ENCODE measurements at regions of chr3 and their contacts with region 1.

Region 1: GRCh38 chr3:4978204-4978965 is 852 bp upstream of the BHLHE40 start:
- DNase-seq: peak; percentile 98
- H3K4me3 ChIP-seq: peak overlapping the region; percentile 2 to 65 (median 63)
- H3K27ac ChIP-seq: peak overlapping the region; percentile 98
- H3K4me1 ChIP-seq: peaks cover 42% of the 10 kb centered on the region
- H3K27me3 ChIP-seq: no peaks in the 10 kb centered on the region
- CTCF ChIP-seq: no peak
- POLR2A ChIP-seq: peak; percentile 75

Region 2: GRCh38 chr3:4493014-4493940 is 485.1 kb before region 1 on chr3 and contains the start of gene ITPR1:
- CTCF ChIA-PET with region 1: no interaction called
- POLR2A ChIA-PET with region 1: no interaction called
- dilution Hi-C with region 1: no loop called
- intact Hi-C with region 1: loop called (anchors 2 kb)
- DNase-seq: peak; percentile 99
- H3K4me3 ChIP-seq: peak within 1 kb of the TSS; percentile 75 to 88 (median 85)
- H3K27ac ChIP-seq: peak within 1 kb of the TSS; percentile 80
- H3K4me1 ChIP-seq: peaks cover 24% of the 10 kb centered on the region
- H3K27me3 ChIP-seq: peaks cover 0 to 2% of the 10 kb centered on the region in 2 experiments
- CTCF ChIP-seq: no peak
- POLR2A ChIP-seq: peak; percentile 99
- total RNA-seq, gene ITPR1: 16.1 and 18.0 TPM in 2 replicates

Region 3: GRCh38 chr3:4722103-4722502 is 256.3 kb before region 1 on chr3:
- CTCF ChIA-PET with region 1: interaction called, 284 read pairs
- POLR2A ChIA-PET with region 1: interaction called, 4 read pairs
- dilution Hi-C with region 1: no loop called
- intact Hi-C with region 1: loop called (anchors 1 kb)
- DNase-seq: peak; percentile 81
- H3K4me3 ChIP-seq: no peak overlapping the region
- H3K27ac ChIP-seq: peak overlapping the region; percentile 1
- H3K4me1 ChIP-seq: no peaks in the 10 kb centered on the region
- H3K27me3 ChIP-seq: no peaks in the 10 kb centered on the region
- CTCF ChIP-seq: peak; percentile 40 to 57
- POLR2A ChIP-seq: no peak

Region 4: GRCh38 chr3:4751502-4752101 is 226.8 kb before region 1 on chr3:
- CTCF ChIA-PET with region 1: interaction called, 9 read pairs
- POLR2A ChIA-PET with region 1: no interaction called
- dilution Hi-C with region 1: no loop called
- intact Hi-C with region 1: loop called (anchors 1 kb)
- DNase-seq: peak; percentile 92
- H3K4me3 ChIP-seq: no peak overlapping the region
- H3K27ac ChIP-seq: peak overlapping the region; percentile 80
- H3K4me1 ChIP-seq: peaks cover 22% of the 10 kb centered on the region
- H3K27me3 ChIP-seq: no peaks in the 10 kb centered on the region
- CTCF ChIP-seq: no peak
- POLR2A ChIP-seq: no peak

Region 5: DNA sequence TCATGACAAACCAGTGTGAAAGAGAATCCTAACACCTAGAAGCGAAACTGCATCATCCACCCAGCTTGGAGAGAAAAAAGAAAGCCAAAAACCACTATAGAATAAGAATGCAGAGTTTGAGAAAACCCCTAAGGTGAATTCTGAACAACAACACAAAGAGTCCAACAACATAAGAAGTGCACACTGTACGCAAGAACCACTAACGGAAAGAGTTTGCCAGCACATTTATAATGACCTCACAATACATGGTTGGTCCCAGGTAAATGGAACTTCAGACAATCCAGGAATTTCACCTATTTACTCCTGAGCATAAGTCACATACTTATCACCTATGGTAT is 127.5 kb before region 1 on chr3:
- CTCF ChIA-PET with region 1: interaction called, 7 read pairs
- POLR2A ChIA-PET with region 1: no interaction called
- dilution Hi-C with region 1: no loop called
- intact Hi-C with region 1: loop called (anchors 1 kb)
- DNase-seq: no peak
- H3K4me3 ChIP-seq: no peak overlapping the region
- H3K27ac ChIP-seq: no peak overlapping the region
- H3K4me1 ChIP-seq: peaks cover 32% of the 10 kb centered on the region
- H3K27me3 ChIP-seq: no peaks in the 10 kb centered on the region
- CTCF ChIP-seq: no peak
- POLR2A ChIP-seq: no peak

Region 6: GRCh38 chr3:5057857-5058324 is 79.5 kb after region 1 on chr3:
- CTCF ChIA-PET with region 1: interaction called, 46 read pairs
- POLR2A ChIA-PET with region 1: no interaction called
- dilution Hi-C with region 1: no loop called
- intact Hi-C with region 1: loop called (anchors 1 kb)
- DNase-seq: peak; percentile 85
- H3K4me3 ChIP-seq: no peak overlapping the region
- H3K27ac ChIP-seq: no peak overlapping the region
- H3K4me1 ChIP-seq: no peaks in the 10 kb centered on the region
- H3K27me3 ChIP-seq: peaks cover 0 to 2% of the 10 kb centered on the region in 2 experiments
- CTCF ChIP-seq: peak; percentile 59 to 65
- POLR2A ChIP-seq: no peak

Region 7: GRCh38 chr3:5376761-5377160 is 398.4 kb after region 1 on chr3:
- CTCF ChIA-PET with region 1: no interaction called
- POLR2A ChIA-PET with region 1: no interaction called
- dilution Hi-C with region 1: no loop called
- intact Hi-C with region 1: no loop called
- DNase-seq: no peak
- H3K4me3 ChIP-seq: no peak overlapping the region
- H3K27ac ChIP-seq: no peak overlapping the region
- H3K4me1 ChIP-seq: no peaks in the 10 kb centered on the region
- H3K27me3 ChIP-seq: no peaks in the 10 kb centered on the region
- CTCF ChIP-seq: no peak
- POLR2A ChIP-seq: no peak